Panc1 (cell line): ENCODE measurements at regions of chr10 and their contacts with region 1.

Region 1: GRCh38 chr10:52779541-52780390 is 7.2 kb upstream of the MBL2 start:
- DNase-seq: peak; percentile 47
- ATAC-seq: peak; percentile 95
- H3K4me3 ChIP-seq: no peak overlapping the region
- H3K27ac ChIP-seq: peak overlapping the region; percentile 51; the same call in 1 of the 2 replicates
- H3K4me1 ChIP-seq: no peaks in the 10 kb centered on the region
- H3K27me3 ChIP-seq: no peaks in the 10 kb centered on the region
- CTCF ChIP-seq: peak; percentile 97

Region 2: GRCh38 chr10:50988792-50989191 is 1791.0 kb before region 1 on chr10:
- CTCF ChIA-PET with region 1: no interaction called
- POLR2A ChIA-PET with region 1: no interaction called
- in situ Hi-C with region 1: no loop called
- intact Hi-C with region 1: loop called (anchors 10 kb)
- DNase-seq: no peak
- ATAC-seq: no peak
- H3K4me3 ChIP-seq: no peak overlapping the region
- H3K27ac ChIP-seq: no peak overlapping the region
- H3K4me1 ChIP-seq: peaks cover 6% of the 10 kb centered on the region
- H3K27me3 ChIP-seq: peaks cover 46% of the 10 kb centered on the region
- CTCF ChIP-seq: peak; percentile 78

Region 3: DNA sequence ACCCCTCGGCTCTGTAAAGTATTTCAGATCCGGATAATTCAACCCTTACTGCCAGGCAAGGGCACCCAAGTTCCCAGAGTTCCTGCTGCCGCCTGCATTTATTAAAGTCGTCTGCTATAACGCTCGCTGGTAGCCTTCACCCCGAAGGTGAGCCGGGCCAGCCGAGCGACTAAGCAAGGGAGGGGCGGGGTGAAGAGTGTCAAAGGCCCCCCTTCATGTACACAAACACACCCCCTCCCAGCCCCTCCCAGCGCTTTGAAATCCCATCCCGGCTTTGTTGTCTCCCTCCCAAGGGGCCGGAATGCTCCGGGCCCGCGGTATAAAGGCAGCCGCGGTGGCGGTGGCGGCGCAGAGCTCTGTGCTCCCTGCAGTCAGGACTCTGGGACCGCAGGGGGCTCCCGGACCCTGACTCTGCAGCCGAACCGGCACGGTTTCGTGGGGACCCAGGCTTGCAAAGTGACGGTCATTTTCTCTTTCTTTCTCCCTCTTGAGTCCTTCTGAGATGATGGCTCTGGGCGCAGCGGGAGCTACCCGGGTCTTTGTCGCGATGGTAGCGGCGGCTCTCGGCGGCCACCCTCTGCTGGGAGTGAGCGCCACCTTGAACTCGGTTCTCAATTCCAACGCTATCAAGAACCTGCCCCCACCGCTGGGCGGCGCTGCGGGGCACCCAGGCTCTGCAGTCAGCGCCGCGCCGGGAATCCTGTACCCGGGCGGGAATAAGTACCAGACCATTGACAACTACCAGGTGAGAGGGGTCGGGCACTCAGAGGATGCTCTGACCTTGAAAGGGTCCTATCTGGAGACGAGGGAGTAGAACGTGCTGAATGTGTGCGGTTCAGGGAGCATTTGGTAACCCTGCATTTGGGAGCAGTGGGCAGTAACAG is 465.6 kb before region 1 on chr10 and contains the start of gene DKK1:
- CTCF ChIA-PET with region 1: no interaction called
- POLR2A ChIA-PET with region 1: no interaction called
- in situ Hi-C with region 1: no loop called
- intact Hi-C with region 1: loop called (anchors 5 kb)
- DNase-seq: no peak
- ATAC-seq: peak; percentile 75
- H3K4me3 ChIP-seq: peak within 1 kb of the TSS; percentile 91 to 97
- H3K27ac ChIP-seq: peak within 1 kb of the TSS; percentile 100
- H3K4me1 ChIP-seq: peaks cover 53% of the 10 kb centered on the region
- H3K27me3 ChIP-seq: no peaks in the 10 kb centered on the region
- CTCF ChIP-seq: peak; percentile 99
- total RNA-seq, gene DKK1: 563 TPM

Region 4: DNA sequence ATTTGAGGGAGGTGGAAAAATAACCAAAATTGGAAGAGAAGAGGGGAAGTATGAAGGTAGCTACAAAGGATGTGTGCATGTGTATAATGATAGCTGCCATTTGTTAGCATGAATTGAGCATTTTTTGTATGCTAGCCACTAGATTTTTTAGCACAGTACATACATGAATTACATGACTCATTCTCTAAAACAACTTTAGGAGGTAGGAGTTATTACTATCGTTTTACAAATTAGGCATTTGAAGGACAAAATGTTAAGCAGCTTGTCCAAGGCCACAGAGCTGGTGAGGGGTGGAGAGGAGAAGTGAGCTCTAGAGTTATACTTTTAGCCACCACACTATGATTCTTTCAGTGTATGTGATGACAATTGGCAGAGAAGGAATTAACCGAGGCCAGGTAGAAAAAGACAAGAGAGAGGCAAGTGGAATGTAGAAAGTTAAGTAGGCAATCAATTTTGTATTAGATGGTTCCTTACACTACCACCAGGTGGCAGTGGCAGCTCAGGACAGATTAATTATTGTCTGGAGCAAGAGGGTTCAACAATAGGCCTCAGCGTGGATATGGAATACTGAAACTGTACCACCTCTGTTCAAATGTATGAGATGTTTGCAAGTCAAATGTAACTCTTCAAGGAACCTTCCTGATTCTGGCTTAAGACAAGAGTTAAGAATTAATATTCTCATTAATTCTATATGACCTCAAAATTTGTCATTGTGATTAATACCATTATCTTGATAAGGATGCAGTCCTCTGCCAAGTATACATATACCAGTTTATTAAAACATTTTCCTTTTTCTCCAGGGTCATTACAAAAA is 135.2 kb before region 1 on chr10:
- CTCF ChIA-PET with region 1: interaction called, 13 read pairs
- POLR2A ChIA-PET with region 1: no interaction called
- in situ Hi-C with region 1: no loop called
- intact Hi-C with region 1: loop called (anchors 2 kb)
- DNase-seq: peak; percentile 28
- ATAC-seq: peak; percentile 75
- H3K4me3 ChIP-seq: no peak overlapping the region
- H3K27ac ChIP-seq: peak overlapping the region; percentile 52; the same call in 1 of the 2 replicates
- H3K4me1 ChIP-seq: no peaks in the 10 kb centered on the region
- H3K27me3 ChIP-seq: no peaks in the 10 kb centered on the region
- CTCF ChIP-seq: peak; percentile 83

Region 5: DNA sequence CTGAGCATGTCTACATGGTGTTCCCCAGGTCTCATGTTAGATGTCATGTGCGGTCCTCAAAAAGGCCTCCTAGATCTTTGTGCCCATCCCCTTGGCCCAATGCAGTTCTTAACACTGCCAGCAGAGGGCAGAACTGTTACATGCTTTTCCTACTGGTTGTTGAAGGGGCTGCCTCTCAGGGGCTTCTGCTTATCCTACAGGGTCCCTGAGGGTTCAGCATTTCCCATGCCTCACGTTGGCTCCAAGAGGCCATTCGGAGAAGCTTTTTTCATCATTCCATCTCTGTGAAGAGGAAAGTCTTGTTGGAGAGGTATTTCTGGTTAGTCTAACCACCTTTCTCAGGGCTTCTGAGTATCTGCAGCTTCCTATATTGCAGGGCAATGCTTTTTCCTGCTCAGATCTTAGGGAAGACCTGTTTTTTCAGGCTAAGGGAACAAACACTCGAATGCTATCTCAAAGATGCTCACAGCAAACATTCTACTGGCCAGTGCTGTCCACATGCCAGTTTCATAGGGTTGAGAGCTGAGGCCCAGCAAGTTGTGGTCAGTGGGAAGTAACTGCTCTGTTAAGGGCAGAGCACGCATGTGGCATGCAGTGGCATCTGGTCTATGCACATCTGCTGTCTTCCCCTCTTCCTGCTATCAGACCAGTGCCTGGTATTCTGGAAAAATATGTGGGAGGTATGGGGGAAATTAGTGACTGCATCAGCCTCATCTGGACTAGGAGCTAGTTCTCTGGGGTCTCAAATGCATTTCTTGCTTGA is 38.7 kb before region 1 on chr10:
- CTCF ChIA-PET with region 1: interaction called, 4 read pairs
- POLR2A ChIA-PET with region 1: no interaction called
- in situ Hi-C with region 1: no loop called
- intact Hi-C with region 1: loop called (anchors 1 kb)
- DNase-seq: peak; percentile 51
- ATAC-seq: peak; percentile 82
- H3K4me3 ChIP-seq: no peak overlapping the region
- H3K27ac ChIP-seq: no peak overlapping the region
- H3K4me1 ChIP-seq: no peaks in the 10 kb centered on the region
- H3K27me3 ChIP-seq: no peaks in the 10 kb centered on the region
- CTCF ChIP-seq: peak; percentile 97